H1 (cell line): ENCODE measurements at regions of chr7 and their contacts with region 1.

Region 1: GRCh38 chr7:94449148-94449725 is 54.5 kb downstream of the COL1A2 start:
- DNase-seq: no peak
- H3K4me3 ChIP-seq: no peak overlapping the region
- H3K27ac ChIP-seq: no peak overlapping the region
- H3K4me1 ChIP-seq: no peaks in the 10 kb centered on the region
- H3K27me3 ChIP-seq: peaks cover 0 to 3% (median 0%) of the 10 kb centered on the region in 4 experiments; a peak in 1 of 7 replicates
- CTCF ChIP-seq: peak in 1 of 3 experiments; percentile 36; a peak in 2 of 4 replicates
- EP300 ChIP-seq: no peak
- POLR2A ChIP-seq: no peak
- RAD21 ChIP-seq: peak; percentile 67 to 74

Region 2: GRCh38 chr7:94258418-94259300 is 190.6 kb before region 1 on chr7:
- CTCF ChIA-PET with region 1: no interaction called
- POLR2A ChIA-PET with region 1: no interaction called
- DNase-seq: peak in 1 of 2 experiments; percentile 47
- H3K4me3 ChIP-seq: no peak overlapping the region
- H3K27ac ChIP-seq: no peak overlapping the region
- H3K4me1 ChIP-seq: peaks cover 0 to 4% (median 0%) of the 10 kb centered on the region in 4 experiments; a peak in 1 of 7 replicates
- H3K27me3 ChIP-seq: no peaks in the 10 kb centered on the region
- CTCF ChIP-seq: no peak
- EP300 ChIP-seq: no peak
- POLR2A ChIP-seq: no peak
- RAD21 ChIP-seq: peak in 1 of 2 experiments; percentile 18; a peak in 1 of 4 replicates

Region 3: GRCh38 chr7:94436018-94436604 is 13.1 kb before region 1 on chr7:
- CTCF ChIA-PET with region 1: interaction called, 33 read pairs
- POLR2A ChIA-PET with region 1: no interaction called
- DNase-seq: peak; percentile 19 to 66
- H3K4me3 ChIP-seq: no peak overlapping the region
- H3K27ac ChIP-seq: no peak overlapping the region
- H3K4me1 ChIP-seq: no peaks in the 10 kb centered on the region
- H3K27me3 ChIP-seq: no peaks in the 10 kb centered on the region
- CTCF ChIP-seq: peak; percentile 34 to 87 (median 74)
- EP300 ChIP-seq: no peak
- POLR2A ChIP-seq: no peak
- RAD21 ChIP-seq: peak; percentile 72 to 75

Region 4: DNA sequence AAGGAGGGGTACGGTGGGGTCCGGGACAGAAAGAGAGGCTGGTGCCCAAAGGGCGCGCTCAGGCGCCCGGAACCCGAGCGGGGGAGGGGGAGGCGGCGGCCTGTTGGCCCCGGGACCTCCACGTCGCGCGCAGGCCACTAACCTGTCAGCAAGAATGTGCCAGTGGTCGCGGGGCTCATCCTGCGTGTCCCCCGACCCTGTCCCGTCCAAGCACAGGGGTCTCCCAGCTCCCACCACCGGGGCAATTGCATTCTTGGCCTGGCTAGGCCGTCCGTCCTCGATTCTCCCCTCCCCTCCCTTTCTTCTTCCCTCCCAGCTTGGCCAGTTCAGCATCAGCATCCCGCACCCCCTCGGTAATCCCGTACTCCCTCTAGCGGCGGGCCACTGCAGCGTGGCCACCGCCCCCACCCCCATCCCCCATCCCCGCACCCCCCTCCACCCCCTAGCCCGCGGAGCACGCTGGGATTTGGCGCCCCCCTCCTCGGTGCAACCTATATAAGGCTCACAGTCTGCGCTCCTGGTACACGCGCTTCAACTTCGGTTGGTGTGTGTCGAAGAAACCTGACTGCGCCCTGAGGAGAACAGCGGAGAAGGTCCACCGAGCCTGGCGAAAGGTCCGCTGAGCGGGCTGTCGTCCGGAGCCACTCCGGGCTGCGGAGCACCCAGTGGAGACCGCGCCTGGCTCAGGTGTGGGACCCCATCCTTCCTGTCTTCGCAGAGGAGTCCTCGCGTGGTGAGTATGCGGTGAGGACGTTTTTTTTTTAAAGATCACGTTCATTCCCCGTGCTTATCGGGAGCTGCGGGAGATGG is 206.8 kb after region 1 on chr7 and contains the start of gene SGCE:
- CTCF ChIA-PET with region 1: interaction called, 10 read pairs
- POLR2A ChIA-PET with region 1: interaction called, 6 read pairs
- DNase-seq: peak; percentile 56 to 91
- H3K4me3 ChIP-seq: peak within 1 kb of the TSS; percentile 62 to 76 (median 66)
- H3K27ac ChIP-seq: no peak within 1 kb of the TSS
- H3K4me1 ChIP-seq: peaks cover 0 to 2% (median under 1%) of the 10 kb centered on the region in 4 experiments; a peak in 3 of 7 replicates
- H3K27me3 ChIP-seq: peaks cover 0 to 9% (median 1%) of the 10 kb centered on the region in 4 experiments; a peak in 2 of 7 replicates
- CTCF ChIP-seq: peak; percentile 28 to 63 (median 32); a peak in 3 of 4 replicates
- EP300 ChIP-seq: peak in 1 of 2 experiments; percentile 40; a peak in 1 of 3 replicates
- POLR2A ChIP-seq: peak; percentile 74 to 88
- RAD21 ChIP-seq: peak; percentile 30 to 36; a peak in 2 of 4 replicates
- total RNA-seq, gene SGCE: 22.2 and 25.0 TPM in 2 replicates

Region 5: DNA sequence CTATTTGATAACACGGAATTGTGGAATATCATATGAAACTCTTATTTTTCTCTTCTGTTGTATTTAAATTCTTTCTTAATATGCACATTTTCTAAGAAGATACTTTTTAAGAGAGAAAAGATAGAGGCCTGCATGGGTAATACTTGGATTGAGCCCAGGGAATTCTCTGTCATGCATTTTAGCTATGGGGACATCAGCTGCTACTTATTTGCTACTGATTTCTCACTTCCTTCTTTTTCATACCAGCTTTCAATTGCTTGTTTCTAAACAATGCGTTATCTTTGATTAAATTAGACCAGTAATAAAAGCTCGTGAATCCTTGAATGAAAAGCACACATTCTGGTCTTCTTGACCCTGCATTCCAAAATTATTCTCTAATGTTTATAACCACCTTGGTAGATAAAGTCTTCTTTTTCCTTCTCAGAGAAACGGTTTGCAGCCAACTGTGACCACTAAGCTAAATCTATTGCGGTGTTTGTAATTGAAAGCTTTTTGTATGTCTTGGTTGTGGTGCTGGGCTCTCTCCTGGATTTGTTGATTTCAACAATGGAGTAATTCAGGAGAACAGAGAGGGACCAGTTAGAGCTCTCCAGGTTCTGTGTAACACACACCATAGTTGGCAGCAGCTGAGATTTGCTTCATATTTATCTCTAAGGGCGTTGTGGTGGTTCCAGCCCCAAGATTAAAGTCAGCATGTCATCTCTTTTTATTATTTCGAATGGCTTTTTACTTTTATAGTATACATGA is 597.4 kb after region 1 on chr7:
- CTCF ChIA-PET with region 1: interaction called, 12 read pairs
- POLR2A ChIA-PET with region 1: no interaction called
- DNase-seq: no peak
- H3K4me3 ChIP-seq: no peak overlapping the region
- H3K27ac ChIP-seq: no peak overlapping the region
- H3K4me1 ChIP-seq: peaks cover 0 to 3% (median 0%) of the 10 kb centered on the region in 4 experiments; a peak in 2 of 7 replicates
- H3K27me3 ChIP-seq: no peaks in the 10 kb centered on the region
- CTCF ChIP-seq: no peak
- EP300 ChIP-seq: no peak
- POLR2A ChIP-seq: no peak
- RAD21 ChIP-seq: no peak

Region 6: DNA sequence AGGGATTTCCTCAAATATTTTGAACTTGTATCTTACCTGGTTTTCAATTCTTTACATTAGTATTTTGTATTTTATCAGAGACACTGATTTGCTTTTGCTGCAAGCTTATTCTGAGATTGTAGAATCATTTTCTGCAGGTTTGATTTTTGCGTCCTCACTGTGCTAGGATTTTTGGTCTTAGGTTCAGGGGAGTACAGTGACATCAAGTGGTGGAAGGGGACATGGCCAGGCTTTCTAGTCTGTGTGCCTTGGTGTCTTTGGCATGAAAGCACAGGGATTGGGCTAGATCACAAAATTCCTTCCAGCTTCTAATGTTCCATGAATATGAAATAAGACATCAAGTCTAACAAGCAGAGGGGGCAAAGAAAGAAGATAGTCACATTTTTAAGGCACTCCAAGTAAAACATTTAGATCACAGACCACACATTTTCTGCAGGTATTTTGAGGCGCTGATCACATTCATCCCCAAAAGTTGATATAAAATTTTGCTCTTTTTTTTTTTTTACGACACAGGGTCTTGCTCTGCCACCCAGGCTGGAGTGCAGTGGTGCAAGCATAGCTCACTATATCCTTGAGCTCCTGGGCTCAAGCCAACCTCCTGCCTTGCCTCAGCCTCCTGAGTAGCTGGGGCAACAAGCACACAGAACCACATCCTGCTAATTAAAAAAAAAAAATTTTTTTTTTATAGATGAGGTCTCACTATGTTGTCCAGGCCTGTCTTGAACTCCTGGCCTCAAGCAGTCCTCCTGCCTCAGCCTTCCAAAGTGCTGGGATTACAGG is 750.7 kb after region 1 on chr7:
- CTCF ChIA-PET with region 1: interaction called, 14 read pairs
- POLR2A ChIA-PET with region 1: no interaction called
- DNase-seq: no peak
- H3K4me3 ChIP-seq: no peak overlapping the region
- H3K27ac ChIP-seq: no peak overlapping the region
- H3K4me1 ChIP-seq: no peaks in the 10 kb centered on the region
- H3K27me3 ChIP-seq: no peaks in the 10 kb centered on the region
- CTCF ChIP-seq: peak; percentile 51 to 73 (median 53)
- EP300 ChIP-seq: no peak
- POLR2A ChIP-seq: no peak
- RAD21 ChIP-seq: peak; percentile 84 to 86